Endothelial cell of umbilical vein (primary cell): ENCODE measurements at regions of chrX and their contacts with region 1.

Region 1: DNA sequence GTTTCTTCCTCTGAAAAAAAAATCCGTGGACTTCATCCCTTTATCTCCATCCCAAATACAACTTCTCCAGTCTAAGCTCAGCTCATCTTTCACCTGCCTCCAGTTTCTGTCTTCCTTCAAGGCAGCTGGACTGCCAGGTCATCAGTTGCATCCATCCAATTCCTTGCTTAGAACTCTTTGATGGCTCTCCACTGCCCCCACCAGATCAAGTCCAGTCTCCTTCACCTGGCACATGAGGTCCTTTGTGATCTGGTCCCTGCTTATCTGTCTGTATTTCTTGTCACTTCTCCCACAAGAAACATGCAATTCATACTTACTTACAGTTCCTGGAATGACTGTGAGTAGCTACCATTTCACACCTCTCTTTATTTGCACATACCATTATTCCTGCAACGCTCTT is 33.8 kb downstream of the OTUD6A start:
- DNase-seq: peak; percentile 31
- H3K4me3 ChIP-seq: no peak overlapping the region
- H3K27ac ChIP-seq: no peak overlapping the region
- H3K4me1 ChIP-seq: no peaks in the 10 kb centered on the region
- H3K27me3 ChIP-seq: no peaks in the 10 kb centered on the region
- CTCF ChIP-seq: peak in 1 of 2 donors; percentile 26
- POLR2A ChIP-seq: no peak

Region 2: DNA sequence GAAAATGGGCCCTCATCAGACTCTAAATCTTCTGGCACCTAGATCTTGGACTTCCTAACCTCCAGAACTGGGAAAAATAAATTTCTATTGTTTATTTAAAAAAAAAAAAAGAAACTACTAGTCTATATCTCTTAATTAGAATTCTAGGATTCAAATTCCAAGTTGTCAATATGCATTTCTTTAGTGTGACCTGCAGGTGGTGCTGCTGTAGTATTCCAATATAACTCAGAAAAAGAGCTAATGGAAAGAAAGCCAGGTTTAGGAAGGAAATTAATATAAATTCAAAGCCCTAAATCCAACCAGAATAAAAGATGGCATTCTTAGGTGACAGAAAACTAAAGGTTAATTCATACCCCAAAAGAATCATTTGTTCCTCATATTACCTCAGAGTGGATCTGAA is 671.9 kb before region 1 on chrX:
- CTCF ChIA-PET with region 1: interaction called, 35 read pairs
- POLR2A ChIA-PET with region 1: no interaction called
- dilution Hi-C with region 1: no loop called
- intact Hi-C with region 1: loop called (anchors 5 kb)
- DNase-seq: peak; percentile 3
- H3K4me3 ChIP-seq: no peak overlapping the region
- H3K27ac ChIP-seq: no peak overlapping the region
- H3K4me1 ChIP-seq: no peaks in the 10 kb centered on the region
- H3K27me3 ChIP-seq: no peaks in the 10 kb centered on the region
- CTCF ChIP-seq: no peak
- POLR2A ChIP-seq: no peak

Region 3: GRCh38 chrX:69493193-69493592 is 602.9 kb before region 1 on chrX:
- CTCF ChIA-PET with region 1: interaction called, 13 read pairs
- POLR2A ChIA-PET with region 1: no interaction called
- dilution Hi-C with region 1: no loop called
- intact Hi-C with region 1: loop called (anchors 2 kb)
- DNase-seq: peak; percentile 1
- H3K4me3 ChIP-seq: no peak overlapping the region
- H3K27ac ChIP-seq: no peak overlapping the region
- H3K4me1 ChIP-seq: no peaks in the 10 kb centered on the region
- H3K27me3 ChIP-seq: peaks cover 0 to 1% of the 10 kb centered on the region in 2 experiments
- CTCF ChIP-seq: peak; percentile 6 to 14
- POLR2A ChIP-seq: no peak

Region 4: DNA sequence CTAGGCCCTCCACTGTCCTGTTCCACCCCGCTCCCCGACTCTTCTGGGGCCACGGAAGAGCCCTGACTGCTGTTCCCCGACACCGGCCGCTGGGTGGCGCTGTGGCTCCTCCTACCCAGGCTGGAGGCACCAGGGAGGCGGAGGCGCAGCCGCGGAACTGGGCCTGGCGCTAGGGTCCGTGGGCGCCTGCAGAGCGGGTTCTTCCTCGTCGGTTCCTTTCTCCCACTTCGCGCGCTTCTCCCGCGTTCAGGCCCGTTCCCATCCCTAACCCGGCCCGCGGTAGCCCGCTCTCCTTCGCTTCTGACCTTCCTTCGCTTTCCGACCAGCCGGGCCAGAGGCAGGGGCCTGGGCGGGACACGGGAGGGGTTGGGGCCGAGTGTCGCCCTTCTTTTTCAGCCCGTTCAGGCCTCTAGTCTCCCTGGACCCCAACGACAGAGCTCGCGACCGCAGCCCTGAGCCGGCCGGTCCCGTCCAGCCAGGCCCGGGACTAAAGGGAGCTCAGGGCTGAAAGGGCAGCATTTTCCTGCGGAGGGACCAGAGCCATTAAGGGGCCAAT is 557.7 kb before region 1 on chrX:
- CTCF ChIA-PET with region 1: interaction called, 70 read pairs
- POLR2A ChIA-PET with region 1: no interaction called
- dilution Hi-C with region 1: no loop called
- intact Hi-C with region 1: loop called (anchors 1 kb)
- DNase-seq: peak; percentile 46
- H3K4me3 ChIP-seq: peak overlapping the region in 2 of 3 experiments; percentile 15 to 22
- H3K27ac ChIP-seq: no peak overlapping the region
- H3K4me1 ChIP-seq: no peaks in the 10 kb centered on the region
- H3K27me3 ChIP-seq: no peaks in the 10 kb centered on the region
- CTCF ChIP-seq: peak; percentile 67 to 81
- POLR2A ChIP-seq: no peak

Region 5: GRCh38 chrX:69615779-69616456 is 480.1 kb before region 1 on chrX and contains the start of gene EDA:
- CTCF ChIA-PET with region 1: interaction called, 9 read pairs
- POLR2A ChIA-PET with region 1: no interaction called
- dilution Hi-C with region 1: no loop called
- intact Hi-C with region 1: loop called (anchors 1 kb)
- DNase-seq: peak; percentile 71
- H3K4me3 ChIP-seq: peak within 1 kb of the TSS in 2 of 3 experiments; percentile 32 to 47
- H3K27ac ChIP-seq: no peak within 1 kb of the TSS
- H3K4me1 ChIP-seq: no peaks in the 10 kb centered on the region
- H3K27me3 ChIP-seq: peaks cover 9 to 15% of the 10 kb centered on the region in 2 experiments
- CTCF ChIP-seq: no peak
- POLR2A ChIP-seq: no peak
- total RNA-seq, gene EDA: 0.44 and 1.2 TPM in 2 replicates